Activated CD4-positive, alpha-beta T cell treated with anti-CD3 and anti-CD28 coated beads, Interleukin-2, amount 10 ng/mL, durations not matched to agents 7 days and 5 days (primary cell): ENCODE measurements at regions of chr1 and their contacts with region 1.

Region 1: GRCh38 chr1:205227584-205228006 is at the start of gene TMCC2:
- DNase-seq: peak; percentile 79
- H3K4me3 Mint-ChIP-seq: peak within 1 kb of the TSS; percentile 76
- H3K27ac Mint-ChIP-seq: peak within 1 kb of the TSS; percentile 64
- H3K4me1 Mint-ChIP-seq: peaks cover 42% of the 10 kb centered on the region
- H3K27me3 Mint-ChIP-seq: peaks cover 43% of the 10 kb centered on the region
- total RNA-seq, gene TMCC2: 0.52 to 0.64 TPM

Region 2: GRCh38 chr1:205061665-205062069 is 165.9 kb before region 1 on chr1:
- CTCF ChIA-PET with region 1: no interaction called
- POLR2A ChIA-PET with region 1: no interaction called
- DNase-seq: peak; percentile 84
- H3K4me3 Mint-ChIP-seq: no peak overlapping the region
- H3K27ac Mint-ChIP-seq: no peak overlapping the region
- H3K4me1 Mint-ChIP-seq: no peaks in the 10 kb centered on the region
- H3K27me3 Mint-ChIP-seq: no peaks in the 10 kb centered on the region

Region 3: GRCh38 chr1:205214756-205215155 is 12.8 kb before region 1 on chr1:
- CTCF ChIA-PET with region 1: interaction called, 18 read pairs
- POLR2A ChIA-PET with region 1: no interaction called
- DNase-seq: no peak
- H3K4me3 Mint-ChIP-seq: peak overlapping the region; percentile 3
- H3K27ac Mint-ChIP-seq: peak overlapping the region; percentile 77
- H3K4me1 Mint-ChIP-seq: peaks cover 39% of the 10 kb centered on the region
- H3K27me3 Mint-ChIP-seq: peaks cover 5% of the 10 kb centered on the region

Region 4: GRCh38 chr1:205248793-205249601 is 21.4 kb after region 1 on chr1:
- CTCF ChIA-PET with region 1: interaction called, 103 read pairs
- POLR2A ChIA-PET with region 1: no interaction called
- DNase-seq: no peak
- H3K4me3 Mint-ChIP-seq: no peak overlapping the region
- H3K27ac Mint-ChIP-seq: no peak overlapping the region
- H3K4me1 Mint-ChIP-seq: peaks cover 17% of the 10 kb centered on the region
- H3K27me3 Mint-ChIP-seq: no peaks in the 10 kb centered on the region